B cell (primary cell): ENCODE measurements at regions of chr2 and their contacts with region 1.

Region 1: DNA sequence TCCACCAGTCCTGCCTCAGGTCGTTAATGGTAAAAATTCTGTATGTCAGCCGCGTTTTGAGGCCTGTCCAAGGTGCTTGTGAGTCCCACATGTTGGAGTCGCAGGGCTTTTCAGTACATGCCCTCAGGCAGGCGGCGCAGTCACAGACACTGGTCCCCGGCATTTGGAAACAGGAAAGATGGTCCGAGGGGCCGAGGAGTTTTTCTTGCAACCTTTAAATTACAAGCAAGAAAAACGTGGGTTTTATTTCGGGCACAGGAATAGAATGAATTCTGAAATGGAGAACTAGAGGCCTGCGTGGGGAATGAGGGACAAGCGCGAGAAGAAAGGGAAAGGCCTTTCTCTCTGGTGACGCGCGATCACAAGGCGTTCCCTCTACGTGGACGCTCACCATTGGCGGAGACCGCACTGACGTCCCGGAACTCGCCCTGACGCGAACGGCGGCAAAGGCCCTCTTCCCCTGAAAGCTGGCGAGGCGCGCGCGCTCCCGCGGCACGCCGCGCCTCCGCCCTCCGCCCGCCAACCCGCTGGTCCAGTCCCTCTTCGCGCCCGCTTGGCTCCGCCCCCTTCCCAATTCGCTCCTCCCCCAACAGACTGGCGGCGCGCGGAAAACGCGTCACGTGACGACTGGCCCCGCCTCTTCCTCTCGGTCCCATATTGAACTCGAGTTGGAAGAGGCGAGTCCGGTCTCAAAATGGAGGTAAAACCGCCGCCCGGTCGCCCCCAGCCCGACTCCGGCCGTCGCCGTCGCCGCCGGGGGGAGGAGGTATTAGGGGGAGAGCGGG is at the start of gene HNRNPA3:
- DNase-seq: peak; percentile 100
- ATAC-seq: peak; percentile 86
- H3K4me3 ChIP-seq: peak within 1 kb of the TSS; percentile 81 to 97 (median 94)
- H3K4me3 Mint-ChIP-seq: peak within 1 kb of the TSS; percentile 91
- H3K27ac ChIP-seq: peak within 1 kb of the TSS; percentile 99 to 100
- H3K27ac Mint-ChIP-seq: peak within 1 kb of the TSS; percentile 98
- H3K4me1 ChIP-seq: peaks cover 32 to 37% of the 10 kb centered on the region in 2 donors
- H3K4me1 Mint-ChIP-seq: peaks cover 47% of the 10 kb centered on the region
- H3K27me3 ChIP-seq: no peaks in the 10 kb centered on the region
- H3K27me3 Mint-ChIP-seq: no peaks in the 10 kb centered on the region
- CTCF ChIP-seq: no peak
- total RNA-seq, gene HNRNPA3: 197 and 200 TPM in 2 replicates

Region 2: DNA sequence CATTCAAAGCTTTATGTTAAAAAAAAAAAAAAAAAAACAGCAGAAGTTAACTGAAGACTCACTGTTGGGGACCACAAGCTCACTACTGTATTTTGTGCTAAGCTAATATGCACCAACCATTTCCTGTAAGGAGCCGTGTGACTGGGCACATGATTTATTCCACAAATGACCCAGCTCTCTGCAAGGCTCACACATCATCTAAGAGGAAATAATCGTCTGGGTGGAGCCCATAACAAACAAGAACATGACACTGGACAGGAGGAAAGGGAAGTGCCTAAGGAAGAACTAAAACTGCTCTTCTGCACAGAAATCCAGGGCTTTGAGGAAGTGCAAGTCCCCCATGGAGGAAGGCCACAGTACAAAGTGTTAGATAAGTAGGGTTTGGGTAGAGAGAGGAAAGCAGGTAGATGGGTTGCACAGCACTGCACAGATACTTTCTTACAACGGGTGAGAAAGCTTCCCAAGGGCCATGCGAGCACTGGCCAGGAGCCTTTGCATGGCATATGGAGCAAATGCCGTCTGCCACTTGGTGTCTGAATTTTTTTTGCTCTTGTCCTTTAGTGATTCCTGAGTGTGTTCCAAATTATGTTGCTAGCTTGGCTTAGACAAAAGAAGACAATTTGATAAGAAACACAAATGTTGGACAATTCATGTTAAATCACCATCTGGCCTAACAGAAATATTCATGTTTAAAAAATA is 27.8 kb after region 1 on chr2:
- CTCF ChIA-PET with region 1: interaction called, 3 read pairs
- POLR2A ChIA-PET with region 1: interaction called, 3 read pairs
- intact Hi-C with region 1: loop called (anchors 2 kb)
- DNase-seq: peak; percentile 88
- ATAC-seq: peak; percentile 82
- H3K4me3 ChIP-seq: peak overlapping the region in 1 of 5 experiments; percentile 12
- H3K4me3 Mint-ChIP-seq: peak overlapping the region; percentile 72
- H3K27ac ChIP-seq: peak overlapping the region; percentile 59 to 60
- H3K27ac Mint-ChIP-seq: peak overlapping the region; percentile 82
- H3K4me1 ChIP-seq: peaks cover 48 to 50% of the 10 kb centered on the region in 2 donors
- H3K4me1 Mint-ChIP-seq: peaks cover 71% of the 10 kb centered on the region
- H3K27me3 ChIP-seq: no peaks in the 10 kb centered on the region
- H3K27me3 Mint-ChIP-seq: no peaks in the 10 kb centered on the region
- CTCF ChIP-seq: no peak